ENCODE measurements at regions of chr1 and their contacts with region 1.

Region 1: GRCh38 chr1:204363335-204364124 is 3.8 kb upstream of the PLEKHA6 start:
- DNase-seq: peak; percentile 74
- H3K4me3 ChIP-seq: peak overlapping the region; percentile 41 to 56
- H3K27ac ChIP-seq: peak overlapping the region in 1 of 2 experiments; percentile 56; a peak in 1 of 4 replicates
- H3K4me1 ChIP-seq: peaks cover 4 to 25% of the 10 kb centered on the region in 2 experiments; a peak in 1 of 4 replicates
- H3K27me3 ChIP-seq: peaks cover 7% of the 10 kb centered on the region; the same call in 1 of the 2 replicates
- CTCF ChIP-seq: peak; percentile 98
- EP300 ChIP-seq: no peak
- RAD21 ChIP-seq: peak; percentile 97

Region 2: GRCh38 chr1:204128964-204129896 is 234.3 kb before region 1 on chr1:
- CTCF ChIA-PET with region 1: interaction called, 29 read pairs
- POLR2A ChIA-PET with region 1: no interaction called
- DNase-seq: peak; percentile 93
- H3K4me3 ChIP-seq: peak overlapping the region; percentile 4 to 39; a peak in 2 of 4 replicates
- H3K27ac ChIP-seq: peak overlapping the region in 1 of 2 experiments; percentile 93; a peak in 2 of 4 replicates
- H3K4me1 ChIP-seq: peaks cover 33 to 59% of the 10 kb centered on the region in 2 experiments
- H3K27me3 ChIP-seq: no peaks in the 10 kb centered on the region
- CTCF ChIP-seq: peak; percentile 83
- EP300 ChIP-seq: no peak
- RAD21 ChIP-seq: peak; percentile 73

Region 3: GRCh38 chr1:204207136-204207616 is 156.4 kb before region 1 on chr1:
- CTCF ChIA-PET with region 1: interaction called, 57 read pairs
- POLR2A ChIA-PET with region 1: no interaction called
- DNase-seq: peak; percentile 86
- H3K4me3 ChIP-seq: no peak overlapping the region; a peak in 1 of 4 replicates
- H3K27ac ChIP-seq: no peak overlapping the region
- H3K4me1 ChIP-seq: peaks cover 0 to 3% of the 10 kb centered on the region in 2 experiments; a peak in 1 of 4 replicates
- H3K27me3 ChIP-seq: peaks cover 6% of the 10 kb centered on the region; the same call in 1 of the 2 replicates
- CTCF ChIP-seq: peak; percentile 90
- EP300 ChIP-seq: no peak
- RAD21 ChIP-seq: peak; percentile 50

Region 4: DNA sequence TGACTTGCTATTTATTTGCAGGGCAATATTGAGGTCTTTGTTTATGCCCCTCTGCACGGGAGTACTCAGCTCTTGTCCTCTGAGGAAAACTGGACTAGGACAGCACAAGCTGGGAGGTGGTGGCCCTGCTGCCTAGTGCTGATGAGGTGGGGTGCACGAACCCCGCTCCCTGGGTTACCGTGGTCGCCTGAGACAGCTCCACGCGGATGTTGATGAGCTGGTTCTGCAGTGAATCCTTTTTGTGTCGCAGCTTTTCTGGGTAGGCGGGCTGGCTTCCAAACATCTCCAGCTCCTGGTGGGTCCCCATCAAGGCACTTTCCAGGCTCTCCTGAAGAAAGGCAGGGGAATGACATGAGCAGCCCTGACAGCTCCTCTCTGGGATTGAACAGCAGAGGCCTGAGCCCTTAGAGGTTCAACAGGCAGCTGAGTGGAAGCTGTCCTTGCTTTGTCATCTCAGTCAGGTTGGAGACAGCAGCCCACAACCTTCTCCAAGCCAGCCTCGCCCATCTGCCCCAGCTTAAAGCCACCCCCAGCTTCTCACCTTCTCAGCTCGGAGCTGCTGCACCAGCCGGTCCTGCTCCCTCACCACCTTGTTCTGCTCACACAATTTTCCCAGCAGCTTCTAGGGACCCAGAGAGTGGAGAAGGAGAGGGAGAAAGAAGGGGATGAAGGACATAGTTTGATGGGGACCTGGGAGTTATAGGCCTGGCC is 114.7 kb before region 1 on chr1:
- CTCF ChIA-PET with region 1: interaction called, 338 read pairs
- POLR2A ChIA-PET with region 1: interaction called, 3 read pairs
- DNase-seq: no peak
- H3K4me3 ChIP-seq: no peak overlapping the region
- H3K27ac ChIP-seq: no peak overlapping the region
- H3K4me1 ChIP-seq: no peaks in the 10 kb centered on the region
- H3K27me3 ChIP-seq: no peaks in the 10 kb centered on the region; the same call in 1 of the 2 replicates
- CTCF ChIP-seq: no peak
- EP300 ChIP-seq: no peak
- RAD21 ChIP-seq: no peak

Region 5: GRCh38 chr1:204301186-204301936 is 62.2 kb before region 1 on chr1:
- CTCF ChIA-PET with region 1: interaction called, 22 read pairs
- POLR2A ChIA-PET with region 1: interaction called, 19 read pairs
- DNase-seq: no peak
- H3K4me3 ChIP-seq: no peak overlapping the region
- H3K27ac ChIP-seq: peak overlapping the region in 1 of 2 experiments; percentile 100; a peak in 2 of 4 replicates
- H3K4me1 ChIP-seq: peaks cover 0 to 56% of the 10 kb centered on the region in 2 experiments; a peak in 2 of 4 replicates
- H3K27me3 ChIP-seq: peaks cover 20% of the 10 kb centered on the region
- CTCF ChIP-seq: no peak
- EP300 ChIP-seq: no peak
- RAD21 ChIP-seq: no peak

Region 6: DNA sequence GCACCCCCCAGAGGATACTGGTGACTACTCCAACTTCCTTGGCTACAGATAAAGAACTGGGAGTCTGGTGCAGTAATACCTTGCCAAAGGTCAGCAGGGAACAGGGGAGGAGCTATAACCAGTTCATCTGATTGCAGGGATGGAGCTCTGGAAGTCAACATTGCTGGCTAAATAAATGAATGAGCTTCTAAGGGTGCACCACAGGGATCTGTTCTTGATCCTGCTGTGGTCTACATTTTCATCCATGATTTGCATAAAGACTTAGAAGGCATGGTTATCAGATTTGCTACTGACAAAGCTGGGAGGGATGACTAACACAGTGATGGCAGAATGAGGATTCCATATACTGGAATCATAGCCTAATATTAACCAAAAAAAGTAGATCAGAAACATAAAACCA is 22.1 kb before region 1 on chr1:
- CTCF ChIA-PET with region 1: interaction called, 75 read pairs
- POLR2A ChIA-PET with region 1: interaction called, 8 read pairs
- DNase-seq: no peak
- H3K4me3 ChIP-seq: no peak overlapping the region
- H3K27ac ChIP-seq: peak overlapping the region in 1 of 2 experiments; percentile 23; a peak in 1 of 4 replicates
- H3K4me1 ChIP-seq: peaks cover 0 to 75% of the 10 kb centered on the region in 2 experiments; a peak in 2 of 4 replicates
- H3K27me3 ChIP-seq: no peaks in the 10 kb centered on the region; the same call in 1 of the 2 replicates
- CTCF ChIP-seq: no peak
- EP300 ChIP-seq: no peak
- RAD21 ChIP-seq: no peak

Region 7: GRCh38 chr1:204390751-204391466 is 27.4 kb after region 1 on chr1:
- CTCF ChIA-PET with region 1: interaction called, 89 read pairs
- POLR2A ChIA-PET with region 1: no interaction called
- DNase-seq: no peak
- H3K4me3 ChIP-seq: no peak overlapping the region
- H3K27ac ChIP-seq: no peak overlapping the region
- H3K4me1 ChIP-seq: peaks cover 0 to 2% of the 10 kb centered on the region in 2 experiments; a peak in 1 of 4 replicates
- H3K27me3 ChIP-seq: no peaks in the 10 kb centered on the region
- CTCF ChIP-seq: no peak
- EP300 ChIP-seq: no peak
- RAD21 ChIP-seq: no peak

Region 8: DNA sequence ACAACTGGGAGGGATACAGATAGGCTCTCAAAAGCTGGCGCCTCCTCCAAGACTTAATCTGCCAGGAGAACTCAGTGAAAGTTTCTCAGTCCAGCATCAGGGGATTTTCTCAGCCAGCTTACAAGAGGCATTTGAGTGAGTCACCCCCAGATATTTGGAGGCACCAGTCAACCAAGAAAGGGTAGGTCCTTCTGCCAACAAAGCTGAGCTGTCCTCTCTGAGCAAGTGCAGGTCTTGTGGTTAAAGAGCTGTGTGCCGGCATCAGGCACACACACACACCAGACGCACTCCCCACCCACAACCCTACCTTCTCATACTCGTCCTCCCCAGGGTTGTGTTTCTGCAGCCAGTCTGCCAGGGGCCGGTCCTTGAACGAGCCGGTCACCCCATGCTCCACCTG is 75.1 kb after region 1 on chr1:
- CTCF ChIA-PET with region 1: no interaction called
- POLR2A ChIA-PET with region 1: no interaction called
- DNase-seq: no peak
- H3K4me3 ChIP-seq: no peak overlapping the region
- H3K27ac ChIP-seq: peak overlapping the region; percentile 87 to 96
- H3K4me1 ChIP-seq: peaks cover 15 to 22% of the 10 kb centered on the region in 2 experiments
- H3K27me3 ChIP-seq: no peaks in the 10 kb centered on the region
- CTCF ChIP-seq: no peak
- EP300 ChIP-seq: peak in 1 of 2 experiments; percentile 93; a peak in 2 of 4 replicates
- RAD21 ChIP-seq: no peak